Caco-2 (cell line): ENCODE measurements at regions of chr22 and their contacts with region 1.

Region 1: GRCh38 chr22:45696227-45696626 is 24.6 kb downstream of the ATXN10 start:
- DNase-seq: no peak
- H3K4me3 ChIP-seq: no peak overlapping the region
- H3K4me3 Mint-ChIP-seq: no peak overlapping the region
- H3K27ac Mint-ChIP-seq: no peak overlapping the region
- H3K4me1 ChIP-seq: peaks cover 6% of the 10 kb centered on the region; the same call in 1 of the 2 replicates
- H3K4me1 Mint-ChIP-seq: no peaks in the 10 kb centered on the region
- H3K27me3 ChIP-seq: no peaks in the 10 kb centered on the region
- H3K27me3 Mint-ChIP-seq: no peaks in the 10 kb centered on the region
- CTCF ChIP-seq: no peak

Region 2: GRCh38 chr22:45645526-45646414 is 50.5 kb before region 1 on chr22:
- CTCF ChIA-PET with region 1: no interaction called
- POLR2A ChIA-PET with region 1: no interaction called
- intact Hi-C with region 1: no loop called
- DNase-seq: peak; percentile 64 to 87
- H3K4me3 ChIP-seq: no peak overlapping the region
- H3K4me3 Mint-ChIP-seq: peak overlapping the region; percentile 21
- H3K27ac Mint-ChIP-seq: no peak overlapping the region
- H3K4me1 ChIP-seq: 0 out of 2 replicates have a peak, but pooled peaks cover 4% of the 10 kb centered on the region
- H3K4me1 Mint-ChIP-seq: no peaks in the 10 kb centered on the region
- H3K27me3 ChIP-seq: no peaks in the 10 kb centered on the region
- H3K27me3 Mint-ChIP-seq: no peaks in the 10 kb centered on the region
- CTCF ChIP-seq: peak; percentile 50 to 94

Region 3: GRCh38 chr22:45667486-45667885 is 28.7 kb before region 1 on chr22:
- CTCF ChIA-PET with region 1: interaction called, 3 read pairs
- POLR2A ChIA-PET with region 1: interaction called, 15 read pairs
- intact Hi-C with region 1: no loop called
- DNase-seq: no peak
- H3K4me3 ChIP-seq: no peak overlapping the region
- H3K4me3 Mint-ChIP-seq: no peak overlapping the region
- H3K27ac Mint-ChIP-seq: no peak overlapping the region
- H3K4me1 ChIP-seq: peaks cover 8% of the 10 kb centered on the region
- H3K4me1 Mint-ChIP-seq: peaks cover 6% of the 10 kb centered on the region
- H3K27me3 ChIP-seq: no peaks in the 10 kb centered on the region
- H3K27me3 Mint-ChIP-seq: peaks cover 10% of the 10 kb centered on the region
- CTCF ChIP-seq: no peak